H1 (cell line): ENCODE measurements at regions of chr22 and their contacts with region 1.

Region 1: GRCh38 chr22:22110548-22111266 is 128.1 kb upstream of the TOP3B start:
- DNase-seq: peak in 1 of 2 experiments; percentile 62
- H3K4me3 ChIP-seq: no peak overlapping the region
- H3K27ac ChIP-seq: no peak overlapping the region
- H3K4me1 ChIP-seq: peaks cover 0 to 2% (median 0%) of the 10 kb centered on the region in 4 experiments; a peak in 3 of 7 replicates
- H3K27me3 ChIP-seq: peaks cover 34 to 63% (median 58%) of the 10 kb centered on the region in 4 experiments
- CTCF ChIP-seq: peak; percentile 64 to 79 (median 78)
- EP300 ChIP-seq: no peak
- POLR2A ChIP-seq: no peak
- RAD21 ChIP-seq: peak; percentile 54 to 60

Region 2: GRCh38 chr22:21907638-21908522 is 202.8 kb before region 1 on chr22:
- CTCF ChIA-PET with region 1: no interaction called
- POLR2A ChIA-PET with region 1: no interaction called
- DNase-seq: no peak
- H3K4me3 ChIP-seq: no peak overlapping the region
- H3K27ac ChIP-seq: no peak overlapping the region
- H3K4me1 ChIP-seq: no peaks in the 10 kb centered on the region
- H3K27me3 ChIP-seq: no peaks in the 10 kb centered on the region; a peak in 1 of 7 replicates
- CTCF ChIP-seq: no peak
- EP300 ChIP-seq: no peak
- POLR2A ChIP-seq: no peak
- RAD21 ChIP-seq: no peak

Region 3: GRCh38 chr22:21921729-21922128 is 189.0 kb before region 1 on chr22:
- CTCF ChIA-PET with region 1: no interaction called
- POLR2A ChIA-PET with region 1: no interaction called
- DNase-seq: peak; percentile 46 to 83
- H3K4me3 ChIP-seq: peak overlapping the region in 1 of 4 experiments; percentile 9; a peak in 1 of 8 replicates
- H3K27ac ChIP-seq: peak overlapping the region; percentile 44; the same call in 1 of the 2 replicates
- H3K4me1 ChIP-seq: peaks cover 11 to 61% (median 46%) of the 10 kb centered on the region in 4 experiments
- H3K27me3 ChIP-seq: no peaks in the 10 kb centered on the region; a peak in 1 of 7 replicates
- CTCF ChIP-seq: 0 out of 4 replicates have a peak, but pooled peaks of 1 of the 3 experiments have one; percentile 1
- EP300 ChIP-seq: peak in 1 of 2 experiments; percentile 71; a peak in 1 of 3 replicates
- POLR2A ChIP-seq: no peak
- RAD21 ChIP-seq: no peak; a peak in 1 of 4 replicates

Region 4: DNA sequence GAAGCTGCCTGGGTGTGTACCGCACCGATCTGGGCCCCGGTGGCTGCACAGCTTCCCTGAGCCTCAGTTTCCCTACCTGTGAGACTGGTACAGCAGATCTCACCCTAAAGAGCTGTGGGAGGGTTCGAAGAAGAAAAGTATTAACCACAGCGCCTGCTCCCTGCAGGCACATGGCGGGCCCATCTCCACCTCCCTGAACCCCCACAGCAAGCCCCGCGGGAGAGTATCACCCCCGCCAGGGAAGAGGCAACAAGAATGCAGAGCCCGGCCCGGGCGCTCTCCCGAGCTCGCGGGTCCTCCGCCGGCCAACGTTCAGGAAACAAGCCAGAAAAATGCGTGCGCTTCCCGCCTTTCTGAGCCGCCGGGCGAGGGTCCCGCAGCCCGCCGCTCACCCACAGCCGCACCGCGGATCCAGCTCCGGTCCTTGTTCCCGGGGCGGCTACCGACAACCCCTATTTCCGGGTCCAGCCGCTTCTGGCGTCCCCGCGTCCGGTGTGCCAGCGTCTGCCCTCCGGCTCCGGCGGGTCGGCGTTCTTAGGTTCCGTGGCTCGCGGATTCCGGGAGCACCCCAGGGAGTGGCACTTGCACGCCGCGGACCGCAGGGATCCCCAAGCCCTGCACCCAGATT is 128.3 kb before region 1 on chr22 and contains the start of gene TOP3B:
- CTCF ChIA-PET with region 1: interaction called, 15 read pairs
- POLR2A ChIA-PET with region 1: no interaction called
- DNase-seq: peak in 1 of 2 experiments; percentile 88
- H3K4me3 ChIP-seq: peak within 1 kb of the TSS; percentile 83 to 98 (median 94)
- H3K27ac ChIP-seq: peak within 1 kb of the TSS; percentile 57; the same call in 1 of the 2 replicates
- H3K4me1 ChIP-seq: peaks cover 0 to 2% (median 0%) of the 10 kb centered on the region in 4 experiments; a peak in 2 of 7 replicates
- H3K27me3 ChIP-seq: peaks cover 3 to 17% (median 15%) of the 10 kb centered on the region in 4 experiments; a peak in 5 of 7 replicates
- CTCF ChIP-seq: no peak
- EP300 ChIP-seq: peak; percentile 18 to 69; a peak in 2 of 3 replicates
- POLR2A ChIP-seq: peak in 1 of 2 experiments; percentile 93; a peak in 2 of 3 replicates
- RAD21 ChIP-seq: no peak
- total RNA-seq, gene TOP3B: 49.3 and 52.8 TPM in 2 replicates

Region 5: DNA sequence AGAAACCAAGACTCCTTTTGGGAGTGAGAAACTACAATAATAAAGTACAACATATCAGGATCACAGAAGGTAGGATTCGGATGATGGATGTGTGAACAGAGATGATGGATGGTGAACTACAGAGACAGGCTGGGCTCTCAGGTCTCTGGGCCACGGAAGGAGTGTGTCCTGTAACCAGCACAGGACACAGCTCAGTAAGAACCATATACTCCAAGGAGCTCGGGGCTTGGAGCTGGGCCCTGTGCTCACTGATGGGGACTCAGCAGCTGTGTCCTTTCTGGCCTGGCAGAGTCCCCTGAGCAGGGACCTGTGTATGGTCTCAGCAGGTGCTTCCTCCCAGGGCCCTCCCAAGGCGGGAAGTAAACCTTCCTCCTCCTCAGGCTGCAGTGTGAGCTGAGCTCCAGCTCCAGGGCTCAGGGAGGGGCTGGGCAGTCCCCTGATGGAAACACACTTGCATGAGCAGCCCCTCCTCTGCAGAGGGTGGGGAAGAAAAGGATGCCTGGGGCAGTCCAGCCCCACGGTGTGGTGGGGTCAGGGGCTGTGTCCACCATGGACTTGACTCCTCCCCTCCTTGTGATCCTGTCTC is 88.4 kb before region 1 on chr22:
- CTCF ChIA-PET with region 1: no interaction called
- POLR2A ChIA-PET with region 1: no interaction called
- DNase-seq: no peak
- H3K4me3 ChIP-seq: no peak overlapping the region
- H3K27ac ChIP-seq: no peak overlapping the region
- H3K4me1 ChIP-seq: peaks cover 0 to 10% (median 5%) of the 10 kb centered on the region in 4 experiments; a peak in 4 of 7 replicates
- H3K27me3 ChIP-seq: peaks cover 4 to 88% (median 75%) of the 10 kb centered on the region in 4 experiments
- CTCF ChIP-seq: no peak
- EP300 ChIP-seq: no peak
- POLR2A ChIP-seq: no peak
- RAD21 ChIP-seq: no peak

Region 6: DNA sequence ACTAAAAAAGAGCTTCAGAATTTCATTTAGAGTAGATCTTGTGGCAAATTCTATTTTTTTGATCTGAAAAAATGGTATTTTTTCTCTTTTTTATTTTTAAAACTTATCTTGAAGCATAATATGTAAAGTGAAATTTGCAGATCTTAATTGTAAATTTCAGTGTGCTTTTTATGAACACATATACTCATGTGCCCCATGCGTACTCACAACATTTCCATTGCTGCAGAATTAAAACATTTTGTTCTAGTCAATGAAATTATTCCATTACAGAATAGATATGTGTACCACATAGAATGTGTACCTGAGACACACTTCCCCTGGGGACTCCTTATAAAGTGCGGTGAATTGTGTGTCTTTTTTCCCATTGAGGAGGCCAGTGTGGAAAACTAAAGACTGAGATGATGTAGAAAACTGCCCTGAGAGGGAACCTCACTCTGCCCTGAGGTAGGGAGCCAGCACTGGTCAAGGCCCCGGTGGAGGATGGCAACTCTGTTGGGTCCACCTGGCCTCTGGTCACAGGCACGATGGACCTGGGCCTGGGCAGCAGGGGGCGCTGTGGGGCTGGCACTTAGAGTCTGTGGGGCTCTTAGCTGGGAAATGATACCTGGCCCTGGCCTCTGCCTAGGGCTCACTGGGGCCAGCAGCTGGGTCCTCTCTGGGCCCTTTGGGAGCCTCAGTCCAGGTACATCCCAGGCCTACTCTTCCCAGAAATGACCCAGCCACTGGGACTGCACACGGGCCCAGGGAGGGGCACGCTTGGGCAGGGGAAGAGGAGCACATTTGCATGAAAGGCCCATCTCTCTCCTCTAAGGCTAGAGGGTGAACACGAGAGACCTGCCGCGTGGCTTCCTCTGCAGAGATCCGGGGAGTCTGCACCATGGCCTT is 50.3 kb before region 1 on chr22:
- CTCF ChIA-PET with region 1: interaction called, 12 read pairs
- POLR2A ChIA-PET with region 1: no interaction called
- DNase-seq: peak; percentile 23 to 97
- H3K4me3 ChIP-seq: no peak overlapping the region
- H3K27ac ChIP-seq: no peak overlapping the region
- H3K4me1 ChIP-seq: peaks cover 0 to 3% (median 0%) of the 10 kb centered on the region in 4 experiments; a peak in 3 of 7 replicates
- H3K27me3 ChIP-seq: peaks cover 49 to 84% (median 76%) of the 10 kb centered on the region in 4 experiments
- CTCF ChIP-seq: peak; percentile 94 to 95 (median 95)
- EP300 ChIP-seq: no peak
- POLR2A ChIP-seq: no peak
- RAD21 ChIP-seq: peak; percentile 76 to 82

Region 7: DNA sequence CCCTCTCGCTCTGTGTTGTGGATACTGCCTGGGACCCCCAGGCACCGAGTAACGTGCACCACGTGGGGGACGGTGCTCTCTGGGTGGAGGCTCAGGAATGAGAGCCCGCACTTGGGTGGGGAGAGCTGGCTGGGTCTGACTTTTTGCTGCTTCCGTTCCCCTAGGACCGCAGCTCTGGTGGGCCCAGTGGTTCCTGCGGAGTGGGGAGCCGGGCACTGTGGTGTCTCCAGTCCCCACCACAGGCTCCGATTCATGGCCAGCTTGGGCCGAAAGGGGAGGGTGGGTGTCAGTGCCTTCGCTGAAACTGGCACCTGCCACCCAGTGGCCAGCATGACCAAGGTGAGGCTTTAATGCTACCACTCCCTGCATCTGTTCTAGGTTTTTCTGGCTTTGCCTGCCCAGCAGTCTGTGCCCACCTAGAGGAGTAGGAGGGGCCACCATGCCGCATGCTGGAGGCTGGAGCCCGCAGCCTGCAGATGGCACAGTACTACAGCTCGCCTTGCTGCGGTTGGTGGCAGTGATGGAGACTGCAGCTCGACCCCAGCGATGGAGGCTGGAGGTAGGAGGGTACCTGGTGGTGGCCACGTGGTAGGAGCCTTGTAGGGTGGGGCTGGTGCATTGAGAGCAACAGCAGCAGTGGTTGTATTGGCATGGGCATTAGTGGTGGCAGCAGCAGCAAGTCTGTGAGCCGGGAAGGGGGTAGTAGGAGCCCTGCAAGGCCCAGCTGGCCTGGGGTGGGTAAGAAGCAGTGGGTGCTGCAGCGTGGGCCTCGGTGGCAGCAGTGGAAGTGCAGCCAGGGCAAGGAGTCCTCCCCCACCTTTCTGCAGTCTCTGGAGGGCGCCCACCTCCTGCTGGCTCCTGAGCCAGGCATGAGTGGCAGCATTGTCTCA is 15.1 kb after region 1 on chr22:
- CTCF ChIA-PET with region 1: interaction called, 23 read pairs
- POLR2A ChIA-PET with region 1: no interaction called
- DNase-seq: no peak
- H3K4me3 ChIP-seq: no peak overlapping the region; a peak in 1 of 8 replicates
- H3K27ac ChIP-seq: no peak overlapping the region
- H3K4me1 ChIP-seq: peaks cover 0 to 7% (median 4%) of the 10 kb centered on the region in 4 experiments; a peak in 2 of 7 replicates
- H3K27me3 ChIP-seq: peaks cover 25 to 80% (median 59%) of the 10 kb centered on the region in 4 experiments
- CTCF ChIP-seq: no peak
- EP300 ChIP-seq: no peak
- POLR2A ChIP-seq: no peak
- RAD21 ChIP-seq: no peak

Region 8: GRCh38 chr22:22168190-22168940 is 57.7 kb after region 1 on chr22:
- CTCF ChIA-PET with region 1: interaction called, 11 read pairs
- POLR2A ChIA-PET with region 1: no interaction called
- DNase-seq: no peak
- H3K4me3 ChIP-seq: peak overlapping the region in 2 of 4 experiments; percentile 10 to 39; a peak in 2 of 8 replicates
- H3K27ac ChIP-seq: no peak overlapping the region
- H3K4me1 ChIP-seq: no peaks in the 10 kb centered on the region
- H3K27me3 ChIP-seq: peaks cover 70 to 94% (median 90%) of the 10 kb centered on the region in 4 experiments
- CTCF ChIP-seq: no peak
- EP300 ChIP-seq: no peak
- POLR2A ChIP-seq: no peak
- RAD21 ChIP-seq: no peak